ENCODE measurements at regions of chr14 and their contacts with region 1.

Region 1: GRCh38 chr14:68672609-68673285 is 120.1 kb downstream of the ZFP36L1 start:
- DNase-seq: no peak

Region 2: GRCh38 chr14:68535404-68536017 is 137.2 kb before region 1 on chr14:
- intact Hi-C with region 1: loop called (anchors 1 to 10 kb)
- DNase-seq: no peak

Measured in posterior vena cava (tissue), 2 donors.